Colonic mucosa (tissue), 4 donors: ENCODE measurements at regions of chr17 and their contacts with region 1.

Region 1: DNA sequence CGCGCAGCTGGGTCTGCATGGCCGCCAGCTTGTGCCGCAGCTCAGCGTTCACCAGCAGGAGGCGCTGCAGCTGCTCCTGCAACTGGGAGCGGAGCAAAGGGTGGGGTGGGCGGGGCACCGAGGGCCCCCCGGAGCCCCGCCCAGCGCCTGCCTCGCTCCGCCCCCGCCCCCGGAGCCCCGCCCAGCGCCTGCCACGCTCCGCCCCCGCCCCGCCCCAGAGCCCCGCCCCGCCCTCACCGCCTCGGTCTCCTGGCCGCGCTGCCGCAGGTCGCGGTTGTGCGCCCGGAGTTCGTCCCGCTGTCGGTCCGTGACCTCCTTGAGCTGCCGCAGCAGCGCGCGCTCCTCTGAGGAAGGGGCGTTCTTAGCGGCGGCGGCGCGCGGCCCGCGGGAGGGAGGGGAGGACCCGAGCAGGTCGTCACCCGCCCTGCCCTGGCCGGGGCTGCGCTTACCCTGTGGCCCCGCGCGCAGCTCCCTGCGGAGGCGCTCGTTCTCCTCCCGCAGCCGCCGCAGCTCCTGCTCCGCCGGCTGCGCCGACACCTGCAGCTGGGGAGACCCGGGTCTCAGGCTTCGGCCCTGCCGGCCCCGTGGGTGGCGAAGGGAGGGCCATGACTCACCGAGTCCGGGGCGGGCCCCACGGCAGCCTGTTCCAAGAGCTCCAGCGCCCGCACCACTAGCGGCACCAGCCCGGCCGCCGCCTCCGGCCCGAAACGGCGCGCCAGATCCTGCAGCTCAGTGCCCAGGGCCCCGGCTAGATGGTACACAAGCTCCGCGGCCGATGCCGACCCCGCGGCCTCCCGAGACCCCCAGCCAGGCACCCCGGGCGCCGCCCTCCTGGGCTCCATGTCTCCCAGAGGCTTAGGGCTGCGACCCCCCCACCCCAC is 463 bp downstream of the RILP start:
- DNase-seq: peak; percentile 94
- H3K4me3 ChIP-seq: peak overlapping the region; percentile 93
- H3K27ac ChIP-seq: peak overlapping the region; percentile 100
- H3K4me1 ChIP-seq: peaks cover 21% of the 10 kb centered on the region
- H3K27me3 ChIP-seq: no peaks in the 10 kb centered on the region
- CTCF ChIP-seq: peak; percentile 79

Region 2: GRCh38 chr17:1267471-1267947 is 381.7 kb before region 1 on chr17:
- intact Hi-C with region 1: loop called (anchors 5 kb)
- DNase-seq: peak; percentile 29
- H3K4me3 ChIP-seq: peak overlapping the region; percentile 48
- H3K27ac ChIP-seq: peak overlapping the region; percentile 68
- H3K4me1 ChIP-seq: peaks cover 6% of the 10 kb centered on the region
- H3K27me3 ChIP-seq: peaks cover 32% of the 10 kb centered on the region
- CTCF ChIP-seq: no peak

Region 3: GRCh38 chr17:1488030-1488863 is 161.0 kb before region 1 on chr17:
- intact Hi-C with region 1: no loop called
- DNase-seq: peak; percentile 89
- H3K4me3 ChIP-seq: peak overlapping the region; percentile 51
- H3K27ac ChIP-seq: peak overlapping the region; percentile 95
- H3K4me1 ChIP-seq: peaks cover 37% of the 10 kb centered on the region
- H3K27me3 ChIP-seq: no peaks in the 10 kb centered on the region
- CTCF ChIP-seq: no peak

Region 4: GRCh38 chr17:1714427-1714979 is 65.3 kb after region 1 on chr17:
- intact Hi-C with region 1: loop called (anchors 10 kb)
- DNase-seq: peak; percentile 100
- H3K4me3 ChIP-seq: peak overlapping the region; percentile 93
- H3K27ac ChIP-seq: peak overlapping the region; percentile 98
- H3K4me1 ChIP-seq: peaks cover 25% of the 10 kb centered on the region
- H3K27me3 ChIP-seq: no peaks in the 10 kb centered on the region
- CTCF ChIP-seq: no peak

Region 5: DNA sequence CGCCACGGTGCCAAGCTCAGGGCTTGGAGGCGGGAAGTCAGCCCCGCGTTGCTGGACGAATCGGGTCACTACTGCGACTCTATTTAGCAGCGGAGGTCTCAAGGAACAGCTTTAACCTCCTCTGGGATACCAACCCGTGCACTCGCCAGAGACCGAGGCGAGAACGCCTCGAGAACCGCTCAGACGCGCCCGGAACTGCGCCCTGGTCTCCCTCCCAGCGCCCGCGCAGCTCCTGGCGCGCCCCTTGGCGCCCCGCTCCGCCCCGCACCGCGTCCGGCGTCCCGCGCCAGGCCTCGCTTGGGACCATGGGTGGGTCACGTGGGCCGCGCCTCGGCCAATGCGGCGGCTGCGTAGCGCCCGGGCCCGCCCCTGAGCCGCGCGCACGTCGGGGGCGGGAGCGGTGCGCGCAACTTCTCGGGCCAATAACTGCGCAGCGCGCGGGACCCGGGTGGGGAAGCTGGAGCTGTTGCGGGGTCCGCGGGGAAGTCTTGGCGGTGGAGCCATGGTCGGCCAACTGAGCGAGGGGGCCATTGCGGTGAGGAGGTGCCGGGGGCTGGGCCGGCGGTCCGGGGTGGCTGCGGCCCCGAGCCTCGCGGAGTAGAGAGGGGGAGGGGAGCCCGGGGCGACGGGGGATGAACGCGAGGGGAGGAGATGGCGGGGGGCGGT is 180.5 kb after region 1 on chr17 and contains the starts of genes RPA1 and SMYD4:
- intact Hi-C with region 1: loop called (anchors 5 kb)
- DNase-seq: peak; percentile 89
- H3K4me3 ChIP-seq: peak within 1 kb of the TSS; percentile 97
- H3K27ac ChIP-seq: peak within 1 kb of the TSS; percentile 74
- H3K4me1 ChIP-seq: peaks cover 10% of the 10 kb centered on the region
- H3K27me3 ChIP-seq: no peaks in the 10 kb centered on the region
- CTCF ChIP-seq: no peak
- total RNA-seq, gene RPA1: 63.4 to 105 TPM
- total RNA-seq, gene SMYD4: 8.0 to 14.7 TPM